Mucosa of descending colon (tissue), 3 donors: ENCODE measurements at regions of chr22 and their contacts with region 1.

Region 1: GRCh38 chr22:36546092-36546804 is 17.3 kb upstream of the EIF3D start:
- DNase-seq: peak in 1 of 3 donors; percentile 22
- ATAC-seq: peak; percentile 64
- H3K4me3 ChIP-seq: no peak overlapping the region
- H3K4me1 ChIP-seq: no peaks in the 10 kb centered on the region
- CTCF ChIP-seq: no peak

Region 2: DNA sequence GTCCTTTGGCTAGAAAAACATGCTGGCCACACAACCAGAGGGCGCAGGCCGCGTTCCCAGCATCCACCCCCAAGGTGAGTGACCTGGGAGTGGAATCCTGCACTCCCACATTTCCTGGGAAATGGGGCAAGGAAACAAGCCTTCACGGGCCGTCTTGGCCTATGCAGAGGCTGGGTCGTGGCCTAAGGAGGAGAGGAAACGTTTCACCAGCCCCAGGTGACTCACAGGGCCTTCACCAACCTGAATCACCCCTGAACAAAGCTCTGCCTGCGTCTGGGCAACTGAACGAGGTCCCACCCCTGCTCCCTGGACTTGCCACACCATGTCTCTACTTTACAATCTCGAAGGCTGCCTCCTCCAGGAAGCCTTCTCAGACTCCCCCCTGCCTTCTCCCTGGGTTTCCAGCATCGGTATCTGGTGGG is 171.6 kb before region 1 on chr22:
- intact Hi-C with region 1: no loop called
- DNase-seq: peak in 1 of 3 donors; percentile 73
- ATAC-seq: peak; percentile 60
- H3K4me3 ChIP-seq: no peak overlapping the region
- H3K4me1 ChIP-seq: peaks cover 88% of the 10 kb centered on the region
- CTCF ChIP-seq: no peak

Region 3: DNA sequence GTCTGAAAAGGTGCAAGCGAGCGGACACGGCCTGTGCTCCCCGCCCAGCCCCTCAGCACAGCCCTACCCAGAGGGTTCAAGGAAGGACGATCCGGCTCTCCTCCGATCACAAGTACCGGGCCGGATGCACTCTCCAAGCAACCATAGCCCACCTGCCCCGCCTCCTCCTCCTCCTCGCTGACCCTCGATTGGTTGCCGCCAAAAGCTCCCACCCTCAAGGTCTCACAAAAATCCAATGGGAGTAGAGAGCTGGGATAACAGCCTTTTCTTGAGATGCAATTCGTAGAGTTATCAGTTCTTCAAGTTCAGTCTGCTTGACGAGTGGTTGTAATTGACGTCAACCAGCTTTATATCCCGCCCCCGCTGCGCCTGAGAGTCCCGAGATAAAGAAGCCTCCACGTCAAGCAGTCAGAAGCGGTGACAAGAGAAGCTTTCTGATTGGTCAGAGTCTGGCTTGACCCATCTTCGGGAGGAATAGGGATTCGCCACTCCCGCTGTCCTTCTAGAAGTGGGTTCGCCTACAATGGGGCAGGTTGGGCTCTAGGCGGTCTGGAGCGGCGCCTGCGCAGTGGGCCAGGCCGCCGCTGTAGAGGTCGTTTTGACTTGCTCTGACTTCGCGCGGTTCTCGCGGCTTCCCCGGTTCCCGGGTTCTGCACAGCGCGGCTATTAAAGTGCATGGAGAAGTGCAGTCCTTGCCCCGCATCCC is 229.9 kb after region 1 on chr22 and contains the start of gene IFT27:
- intact Hi-C with region 1: loop called in 1 of 2 experiments (anchors 10 kb)
- DNase-seq: peak; percentile 94 to 99 (median 97)
- ATAC-seq: peak; percentile 96
- H3K4me3 ChIP-seq: peak within 1 kb of the TSS; percentile 94
- H3K4me1 ChIP-seq: peaks cover 12% of the 10 kb centered on the region
- CTCF ChIP-seq: no peak
- total RNA-seq, gene IFT27: 29.0 to 37.2 (median 29.7) TPM